Common myeloid progenitor, CD34-positive (primary cell): ENCODE measurements at regions of chr17 and their contacts with region 1.

Region 1: DNA sequence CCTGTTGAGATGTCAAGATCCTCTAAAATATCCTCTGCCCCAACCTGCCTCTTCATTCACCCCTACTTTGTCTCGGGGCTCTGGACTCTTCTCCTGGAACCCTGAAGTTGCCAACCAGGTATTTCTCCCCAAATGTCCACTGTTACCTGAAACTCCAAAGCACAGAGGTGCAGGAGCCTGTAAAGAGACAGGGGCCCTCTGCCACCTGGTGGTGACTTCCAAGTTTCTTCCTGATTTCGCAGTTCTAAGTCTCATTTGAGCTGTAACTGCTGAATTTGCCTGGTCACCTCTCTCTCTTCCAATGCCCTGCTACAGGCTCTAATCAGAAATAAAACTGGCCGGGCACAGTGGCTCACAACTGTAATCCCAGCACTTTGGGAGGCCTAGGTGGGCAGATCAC is 77.1 kb upstream of the RCVRN start:
- DNase-seq: peak; percentile 42 to 69 (median 62)
- H3K4me3 ChIP-seq: no peak overlapping the region
- H3K27ac ChIP-seq: no peak overlapping the region
- H3K4me1 ChIP-seq: peaks cover 5 to 15% (median 8%) of the 10 kb centered on the region in 4 experiments
- H3K27me3 ChIP-seq: no peaks in the 10 kb centered on the region

Region 2: GRCh38 chr17:9912121-9913099 is 69.7 kb before region 1 on chr17:
- CTCF ChIA-PET with region 1: no interaction called
- POLR2A ChIA-PET with region 1: no interaction called
- DNase-seq: no peak
- H3K4me3 ChIP-seq: no peak overlapping the region
- H3K27ac ChIP-seq: no peak overlapping the region
- H3K4me1 ChIP-seq: no peaks in the 10 kb centered on the region
- H3K27me3 ChIP-seq: peaks cover 0 to 8% (median 0%) of the 10 kb centered on the region in 5 experiments

Region 3: DNA sequence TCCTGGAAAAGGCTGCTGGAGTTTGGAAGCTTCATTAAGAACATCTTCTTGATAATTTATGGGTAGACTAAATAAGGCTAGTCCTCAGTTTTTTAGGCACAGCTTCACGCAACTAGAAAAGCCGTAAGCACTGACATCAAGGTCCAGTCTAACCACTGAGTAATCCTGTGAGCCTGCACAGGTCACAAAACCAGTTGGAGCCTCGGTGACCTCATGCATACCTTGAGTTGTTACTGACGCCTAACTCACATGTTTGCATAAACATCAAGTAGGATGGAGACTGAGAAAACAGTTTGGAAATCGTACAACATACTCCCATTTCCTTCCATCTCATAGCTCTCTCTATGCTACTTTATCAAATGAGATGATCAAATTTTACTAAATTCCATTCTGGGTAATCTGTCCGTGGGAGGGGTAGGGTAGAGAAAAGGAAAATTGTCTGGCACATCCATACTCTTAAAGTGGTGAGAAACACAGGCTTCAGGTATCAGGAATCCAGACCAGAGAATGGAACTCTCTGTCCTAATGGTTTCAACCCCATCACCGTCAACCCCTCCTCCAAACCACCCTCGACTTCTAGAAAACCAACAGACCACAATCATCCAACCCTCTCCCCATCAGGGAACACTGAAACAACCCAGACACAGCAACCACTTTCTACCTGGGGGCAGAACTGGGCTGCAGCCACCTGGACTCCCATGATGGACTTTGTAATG is 13.1 kb before region 1 on chr17:
- CTCF ChIA-PET with region 1: interaction called, 74 read pairs
- POLR2A ChIA-PET with region 1: no interaction called
- DNase-seq: no peak
- H3K4me3 ChIP-seq: no peak overlapping the region
- H3K27ac ChIP-seq: no peak overlapping the region
- H3K4me1 ChIP-seq: peaks cover 8 to 20% (median 11%) of the 10 kb centered on the region in 4 experiments
- H3K27me3 ChIP-seq: no peaks in the 10 kb centered on the region